Natural killer cell (primary cell): ENCODE measurements at regions of chr3 and their contacts with region 1.

Region 1: GRCh38 chr3:32467333-32468070 is 35.1 kb downstream of the CMTM6 start:
- DNase-seq: peak; percentile 73 to 88
- ATAC-seq: peak; percentile 89 to 97 (median 95)
- H3K4me3 ChIP-seq: peak overlapping the region; percentile 37
- H3K4me3 Mint-ChIP-seq: peak overlapping the region; percentile 51
- H3K27ac ChIP-seq: peak overlapping the region; percentile 40
- H3K27ac Mint-ChIP-seq: no peak overlapping the region
- H3K4me1 ChIP-seq: peaks cover 6% of the 10 kb centered on the region
- H3K4me1 Mint-ChIP-seq: peaks cover 0 to 5% of the 10 kb centered on the region in 2 donors
- H3K27me3 ChIP-seq: no peaks in the 10 kb centered on the region
- H3K27me3 Mint-ChIP-seq: no peaks in the 10 kb centered on the region
- CTCF ChIP-seq: peak; percentile 99

Region 2: DNA sequence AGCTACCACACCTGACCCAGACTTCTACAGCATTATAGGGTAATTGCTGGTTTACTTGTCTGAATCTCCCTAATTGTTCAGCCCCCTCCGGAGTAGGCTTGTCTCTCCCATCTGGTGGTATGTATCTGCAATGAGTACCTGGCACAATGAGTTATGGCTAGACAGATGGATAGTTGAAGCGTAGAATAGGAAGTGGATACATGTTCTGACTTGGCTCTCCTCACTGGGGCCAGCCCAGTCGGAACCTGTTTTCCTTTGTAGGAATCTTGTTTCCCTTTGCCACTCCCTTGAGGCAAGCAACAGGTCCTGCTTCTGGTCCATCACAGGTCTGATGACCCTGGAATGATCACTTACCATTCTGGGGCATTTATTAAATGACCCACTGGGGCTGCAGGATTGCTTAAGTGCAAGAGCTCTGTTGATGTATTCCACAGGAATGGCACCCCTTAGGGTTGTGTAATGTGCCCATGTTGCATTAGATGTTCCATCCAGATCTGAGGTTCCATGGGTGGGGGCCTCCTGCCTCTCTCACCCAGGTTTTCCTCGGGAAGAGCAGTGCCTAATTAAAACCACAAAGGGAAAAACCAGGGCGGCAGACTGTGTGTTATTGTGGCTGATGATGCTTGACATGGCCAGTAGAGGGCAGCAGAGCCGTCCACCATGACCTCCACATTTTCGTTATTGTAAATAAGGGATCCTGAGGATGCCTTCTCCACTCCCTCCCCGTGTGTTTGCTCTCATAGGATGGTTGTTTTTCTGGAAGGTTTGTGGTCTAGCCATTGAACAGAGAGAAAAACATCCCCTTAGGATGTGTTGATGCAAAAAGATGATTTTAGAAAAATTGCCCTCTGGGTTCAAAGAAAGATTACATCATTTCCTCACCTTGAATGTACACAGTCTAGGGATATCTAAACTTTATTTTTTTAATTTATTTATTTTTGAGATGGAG is 171.0 kb before region 1 on chr3:
- intact Hi-C with region 1: loop called (anchors 2 kb)
- DNase-seq: peak; percentile 35 to 88
- ATAC-seq: peak; percentile 77 to 90 (median 82)
- H3K4me3 ChIP-seq: no peak overlapping the region
- H3K4me3 Mint-ChIP-seq: no peak overlapping the region
- H3K27ac ChIP-seq: no peak overlapping the region
- H3K27ac Mint-ChIP-seq: no peak overlapping the region
- H3K4me1 ChIP-seq: peaks cover 7% of the 10 kb centered on the region
- H3K4me1 Mint-ChIP-seq: peaks cover 0 to 5% of the 10 kb centered on the region in 2 donors
- H3K27me3 ChIP-seq: no peaks in the 10 kb centered on the region
- H3K27me3 Mint-ChIP-seq: peaks cover 0 to 3% of the 10 kb centered on the region in 2 donors
- CTCF ChIP-seq: peak; percentile 96

Region 3: GRCh38 chr3:32374788-32375595 is 92.5 kb before region 1 on chr3:
- intact Hi-C with region 1: loop called (anchors 1 kb)
- DNase-seq: peak; percentile 31 to 91
- ATAC-seq: peak; percentile 77 to 90 (median 87)
- H3K4me3 ChIP-seq: no peak overlapping the region
- H3K4me3 Mint-ChIP-seq: no peak overlapping the region
- H3K27ac ChIP-seq: no peak overlapping the region
- H3K27ac Mint-ChIP-seq: no peak overlapping the region
- H3K4me1 ChIP-seq: no peaks in the 10 kb centered on the region
- H3K4me1 Mint-ChIP-seq: peaks cover 6 to 9% of the 10 kb centered on the region in 2 donors
- H3K27me3 ChIP-seq: no peaks in the 10 kb centered on the region
- H3K27me3 Mint-ChIP-seq: peaks cover 0 to 2% of the 10 kb centered on the region in 2 donors
- CTCF ChIP-seq: peak; percentile 72

Region 4: GRCh38 chr3:32391643-32392535 is 75.6 kb before region 1 on chr3 and contains the start of gene CMTM7:
- intact Hi-C with region 1: loop called (anchors 5 kb)
- DNase-seq: peak; percentile 33 to 77
- ATAC-seq: peak; percentile 72 to 75 (median 72)
- H3K4me3 ChIP-seq: peak within 1 kb of the TSS; percentile 79
- H3K4me3 Mint-ChIP-seq: peak within 1 kb of the TSS; percentile 96
- H3K27ac ChIP-seq: peak within 1 kb of the TSS; percentile 67
- H3K27ac Mint-ChIP-seq: peak within 1 kb of the TSS; percentile 75 to 92
- H3K4me1 ChIP-seq: peaks cover 27% of the 10 kb centered on the region
- H3K4me1 Mint-ChIP-seq: peaks cover 41 to 45% of the 10 kb centered on the region in 2 donors
- H3K27me3 ChIP-seq: no peaks in the 10 kb centered on the region
- H3K27me3 Mint-ChIP-seq: no peaks in the 10 kb centered on the region
- CTCF ChIP-seq: no peak
- total RNA-seq, gene CMTM7: 4.1 to 16.7 (median 12.8) TPM